WTC11 (cell line): ENCODE measurements at regions of chr7 and their contacts with region 1.

Region 1: GRCh38 chr7:117096330-117096729 is 143.0 kb downstream of the ST7 start:
- DNase-seq: no peak
- ATAC-seq: no peak
- H3K4me3 Mint-ChIP-seq: no peak overlapping the region
- H3K27ac Mint-ChIP-seq: no peak overlapping the region
- H3K4me1 Mint-ChIP-seq: peaks cover 5% of the 10 kb centered on the region; the same call in 1 of the 2 replicates
- H3K27me3 Mint-ChIP-seq: no peaks in the 10 kb centered on the region
- CTCF ChIP-seq: no peak

Region 2: DNA sequence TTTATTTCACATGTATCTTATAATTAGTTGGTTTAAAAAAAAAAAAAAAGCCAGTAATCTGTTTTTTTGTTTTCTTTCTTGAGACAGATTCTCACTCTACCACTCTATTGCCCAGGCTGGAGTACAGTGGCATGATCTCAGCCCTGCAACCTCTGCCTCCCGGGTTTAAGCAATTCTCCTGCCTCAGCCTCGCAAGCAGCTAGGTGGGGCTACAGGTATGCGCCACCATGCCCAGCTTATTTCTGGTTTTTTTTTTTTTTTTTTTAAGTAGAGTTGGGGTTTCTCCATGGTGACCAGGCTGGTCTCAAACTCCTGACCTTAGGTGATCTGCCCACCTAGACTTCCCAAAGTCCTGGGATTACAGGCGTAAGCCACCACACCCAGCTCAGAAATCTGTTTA is 268.0 kb before region 1 on chr7:
- CTCF ChIA-PET with region 1: no interaction called
- POLR2A ChIA-PET with region 1: no interaction called
- DNase-seq: peak; percentile 36
- ATAC-seq: peak; percentile 86
- H3K4me3 Mint-ChIP-seq: no peak overlapping the region
- H3K27ac Mint-ChIP-seq: no peak overlapping the region
- H3K4me1 Mint-ChIP-seq: peaks cover 9% of the 10 kb centered on the region
- H3K27me3 Mint-ChIP-seq: no peaks in the 10 kb centered on the region; the same call in 1 of the 2 replicates
- CTCF ChIP-seq: no peak

Region 3: DNA sequence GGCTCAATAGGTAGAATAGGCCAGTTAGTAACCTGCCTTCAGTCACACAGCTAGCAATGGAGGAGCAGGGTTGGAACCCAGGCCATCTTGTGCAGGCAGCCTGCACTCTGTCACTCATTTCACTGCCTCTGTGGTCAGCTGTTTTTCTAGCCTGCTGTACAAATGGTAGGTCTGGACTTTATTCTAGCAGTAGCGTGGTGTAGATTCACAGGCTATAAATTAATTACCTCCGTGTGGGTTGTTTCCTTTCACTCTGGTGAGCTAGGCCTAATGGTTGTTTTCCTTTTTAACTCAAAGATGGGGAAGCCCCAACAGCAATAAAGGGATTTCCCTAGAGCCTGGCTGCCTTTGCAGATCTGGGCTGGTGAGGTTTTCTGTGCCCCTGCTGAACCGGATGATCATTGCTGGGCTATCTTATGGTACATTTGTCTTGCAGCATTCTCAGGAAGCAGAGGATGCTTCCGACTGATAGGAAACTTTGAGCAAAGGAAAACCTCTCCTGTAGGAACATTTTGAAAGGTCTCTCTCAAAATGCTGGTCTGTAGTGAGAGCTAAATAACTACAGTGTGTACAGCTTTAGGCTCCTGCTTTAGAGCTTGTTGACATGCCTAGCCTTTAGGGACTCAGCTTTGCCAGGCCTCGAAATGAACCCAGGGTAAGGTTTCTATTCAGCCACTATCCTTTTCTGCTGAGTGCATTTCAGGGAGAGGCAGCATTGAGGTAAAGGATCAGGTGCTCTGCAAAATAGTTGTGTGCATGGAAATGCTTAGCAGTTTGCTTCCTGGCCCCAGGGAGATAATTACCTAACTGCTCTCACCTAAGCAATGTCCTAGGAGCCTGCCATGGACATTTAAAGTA is 14.4 kb after region 1 on chr7:
- CTCF ChIA-PET with region 1: no interaction called
- POLR2A ChIA-PET with region 1: interaction called, 11 read pairs
- DNase-seq: no peak
- ATAC-seq: peak; percentile 68
- H3K4me3 Mint-ChIP-seq: no peak overlapping the region
- H3K27ac Mint-ChIP-seq: 0 out of 2 replicates have a peak overlapping the region, but pooled peaks have one; percentile 39
- H3K4me1 Mint-ChIP-seq: peaks cover 26% of the 10 kb centered on the region
- H3K27me3 Mint-ChIP-seq: no peaks in the 10 kb centered on the region
- CTCF ChIP-seq: no peak

Region 4: DNA sequence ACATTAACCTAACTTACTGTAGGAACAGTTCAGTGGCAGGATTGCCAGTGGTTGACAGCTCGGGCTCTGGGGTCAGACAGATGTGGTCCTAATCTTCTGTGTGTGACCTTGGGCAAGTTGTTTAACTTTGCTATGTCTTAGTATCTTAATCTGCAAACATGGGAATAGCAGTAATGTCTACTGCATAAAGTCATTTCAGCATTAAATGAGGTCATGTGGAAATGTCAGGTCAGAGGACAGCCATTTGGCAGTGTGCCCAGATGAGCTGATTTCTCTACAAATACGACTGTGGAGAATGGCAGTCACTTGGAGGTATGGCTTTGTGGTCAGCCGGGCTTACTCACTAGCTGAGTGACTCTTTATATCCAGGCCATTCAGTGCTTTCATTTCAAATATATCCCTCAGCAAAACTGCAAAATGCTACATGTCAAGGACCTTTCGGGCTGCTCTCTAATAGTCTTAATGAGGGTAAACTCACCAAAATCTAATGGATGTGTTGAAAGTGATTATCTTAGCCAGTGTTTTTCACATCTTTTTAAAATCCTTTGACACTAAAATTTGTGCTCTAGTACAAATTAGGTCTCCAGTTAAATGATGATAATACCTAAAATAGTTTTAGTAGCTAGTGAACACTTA is 28.4 kb after region 1 on chr7:
- CTCF ChIA-PET with region 1: no interaction called
- POLR2A ChIA-PET with region 1: no interaction called
- DNase-seq: no peak
- ATAC-seq: no peak
- H3K4me3 Mint-ChIP-seq: no peak overlapping the region
- H3K27ac Mint-ChIP-seq: no peak overlapping the region
- H3K4me1 Mint-ChIP-seq: peaks cover 23% of the 10 kb centered on the region
- H3K27me3 Mint-ChIP-seq: no peaks in the 10 kb centered on the region
- CTCF ChIP-seq: no peak